ENCODE measurements at regions of chr9 and their contacts with region 1.

Region 1: DNA sequence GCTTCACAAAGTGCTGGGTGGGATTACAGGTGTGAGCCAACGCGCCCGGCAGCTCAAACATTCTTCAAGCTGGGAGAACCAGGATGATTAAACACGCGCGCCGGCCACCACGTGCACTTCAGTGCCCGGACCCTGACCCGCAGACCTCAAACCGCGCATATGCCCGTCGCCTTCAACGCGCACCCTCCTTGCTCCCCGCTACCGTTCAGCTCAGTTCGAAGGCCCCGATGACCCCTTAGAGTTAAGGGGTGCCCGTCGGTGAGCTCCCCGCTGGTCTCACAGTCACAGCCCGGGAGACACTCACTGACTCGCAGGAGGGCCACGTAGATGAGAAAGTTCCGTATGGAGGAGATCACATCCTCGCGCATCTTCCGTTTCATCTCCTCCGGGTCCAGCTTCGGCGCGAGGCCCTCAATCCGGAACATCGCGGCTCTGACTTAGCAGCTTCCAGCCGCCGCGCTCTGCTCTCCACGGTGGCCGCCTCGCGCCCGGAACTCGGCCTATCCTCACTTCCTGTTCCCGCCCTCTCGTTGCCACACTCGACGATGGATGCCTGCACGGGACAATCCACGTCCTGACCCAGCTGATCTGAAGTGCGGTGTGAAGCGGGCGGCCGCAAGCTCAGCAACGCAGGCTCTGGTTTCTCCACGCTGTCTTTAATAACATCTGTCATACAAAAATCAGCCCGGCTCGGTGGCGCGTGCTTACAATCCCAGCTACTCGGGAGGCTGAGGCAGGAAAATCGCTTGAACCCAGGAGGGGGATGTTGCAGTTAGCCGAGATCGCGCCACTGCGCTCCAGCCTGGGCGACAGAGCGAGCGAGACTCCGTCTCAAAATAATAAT is at the start of gene TOMM5:
- DNase-seq: peak; percentile 96
- H3K4me3 ChIP-seq: peak within 1 kb of the TSS; percentile 82 to 86 (median 85)
- H3K27ac ChIP-seq: peak within 1 kb of the TSS; percentile 81 to 90 (median 84)
- H3K4me1 ChIP-seq: peaks cover 0 to 48% (median 28%) of the 10 kb centered on the region in 4 donors
- H3K27me3 ChIP-seq: no peaks in the 10 kb centered on the region
- CTCF ChIP-seq: no peak
- EP300 ChIP-seq: peak in 1 of 4 donors; percentile 69
- POLR2A ChIP-seq: peak; percentile 79 to 91
- total RNA-seq, gene TOMM5: 69.2 to 173 (median 134) TPM

Region 2: DNA sequence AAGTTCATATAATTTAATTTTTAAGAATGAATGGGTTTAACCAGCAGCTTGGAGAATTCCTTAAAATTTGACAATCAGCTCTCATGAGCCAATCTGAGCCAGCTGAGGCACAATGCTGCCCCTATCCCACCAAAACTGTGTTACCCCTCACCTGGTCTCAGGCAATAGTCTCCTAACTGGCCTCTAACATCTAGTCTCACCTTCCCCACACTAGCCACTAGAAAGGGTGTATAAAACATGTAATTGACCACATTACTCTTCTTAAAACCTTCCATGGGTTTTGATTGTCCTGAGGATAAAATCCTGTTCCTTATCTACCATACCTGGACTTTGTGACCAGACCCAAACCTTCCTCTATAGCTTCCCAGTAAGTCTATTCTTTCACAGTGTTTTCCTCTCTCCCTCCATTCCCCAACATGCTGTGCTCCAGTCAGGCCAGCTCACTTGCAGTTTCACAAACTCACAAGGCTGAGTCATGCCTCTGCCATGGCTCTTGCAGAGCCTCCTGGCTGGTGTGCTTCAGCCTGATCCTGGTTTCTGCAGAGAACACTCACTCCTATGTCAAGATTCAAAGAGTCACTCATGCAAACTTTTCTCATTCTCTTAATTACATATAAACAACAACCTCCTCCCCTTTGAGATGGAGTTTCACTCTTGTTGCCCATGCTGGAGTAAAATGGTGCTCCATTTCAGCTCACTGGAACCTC is 488.0 kb before region 1 on chr9:
- intact Hi-C with region 1: no loop called
- DNase-seq: no peak
- H3K4me3 ChIP-seq: no peak overlapping the region
- H3K27ac ChIP-seq: no peak overlapping the region
- H3K4me1 ChIP-seq: no peaks in the 10 kb centered on the region
- H3K27me3 ChIP-seq: peaks cover 0 to 5% (median 0%) of the 10 kb centered on the region in 3 donors
- CTCF ChIP-seq: no peak
- EP300 ChIP-seq: no peak
- POLR2A ChIP-seq: no peak

Region 3: DNA sequence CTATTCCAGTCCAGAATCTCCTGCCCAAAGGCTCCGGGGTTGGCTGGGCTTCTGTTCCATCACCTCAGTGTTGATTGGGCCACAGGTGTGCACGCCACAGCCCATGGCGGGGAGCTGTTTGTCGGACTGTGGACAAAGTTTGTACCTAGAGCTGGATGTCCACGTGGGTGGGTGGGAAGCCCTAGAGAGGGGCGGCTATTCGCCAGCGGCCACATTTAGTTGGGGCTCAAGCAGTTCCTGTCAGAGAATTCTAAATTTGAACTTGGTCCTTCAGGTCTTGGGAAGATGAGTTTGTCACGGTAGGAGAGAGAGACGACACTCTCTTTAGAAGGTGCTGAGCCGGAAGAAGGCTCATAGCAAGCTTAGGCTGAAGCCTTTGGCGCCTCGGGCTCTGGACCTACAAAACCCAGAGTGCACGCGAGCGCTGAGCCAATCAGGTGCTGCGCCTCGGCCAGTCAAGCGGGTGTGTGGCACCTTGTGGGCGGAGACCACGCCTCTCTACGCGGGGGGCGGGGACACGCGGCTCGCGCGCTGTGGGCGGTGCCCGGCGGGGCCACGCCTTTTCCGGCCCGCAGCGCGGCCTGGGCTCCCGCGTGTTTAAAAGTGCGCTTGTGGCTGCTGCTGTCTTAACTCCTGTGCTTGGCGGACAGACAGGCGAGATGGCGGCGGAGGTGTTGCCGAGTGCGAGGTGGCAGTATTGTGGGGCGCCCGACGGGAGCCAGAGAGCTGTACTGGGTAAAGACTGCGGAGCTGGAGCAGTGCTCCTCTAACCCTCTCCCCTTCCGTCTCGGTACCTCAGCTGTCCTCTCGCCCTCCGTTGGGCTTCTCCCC is 106.7 kb before region 1 on chr9 and contains the start of gene POLR1E:
- intact Hi-C with region 1: loop called (anchors 2 kb)
- DNase-seq: peak; percentile 97
- H3K4me3 ChIP-seq: peak within 1 kb of the TSS; percentile 53 to 79 (median 69)
- H3K27ac ChIP-seq: peak within 1 kb of the TSS; percentile 82 to 95 (median 91)
- H3K4me1 ChIP-seq: peaks cover 0 to 33% (median 28%) of the 10 kb centered on the region in 4 donors
- H3K27me3 ChIP-seq: no peaks in the 10 kb centered on the region
- CTCF ChIP-seq: no peak
- EP300 ChIP-seq: no peak
- POLR2A ChIP-seq: peak; percentile 43 to 70
- total RNA-seq, gene POLR1E: 17.4 to 33.4 (median 28.1) TPM

Region 4: DNA sequence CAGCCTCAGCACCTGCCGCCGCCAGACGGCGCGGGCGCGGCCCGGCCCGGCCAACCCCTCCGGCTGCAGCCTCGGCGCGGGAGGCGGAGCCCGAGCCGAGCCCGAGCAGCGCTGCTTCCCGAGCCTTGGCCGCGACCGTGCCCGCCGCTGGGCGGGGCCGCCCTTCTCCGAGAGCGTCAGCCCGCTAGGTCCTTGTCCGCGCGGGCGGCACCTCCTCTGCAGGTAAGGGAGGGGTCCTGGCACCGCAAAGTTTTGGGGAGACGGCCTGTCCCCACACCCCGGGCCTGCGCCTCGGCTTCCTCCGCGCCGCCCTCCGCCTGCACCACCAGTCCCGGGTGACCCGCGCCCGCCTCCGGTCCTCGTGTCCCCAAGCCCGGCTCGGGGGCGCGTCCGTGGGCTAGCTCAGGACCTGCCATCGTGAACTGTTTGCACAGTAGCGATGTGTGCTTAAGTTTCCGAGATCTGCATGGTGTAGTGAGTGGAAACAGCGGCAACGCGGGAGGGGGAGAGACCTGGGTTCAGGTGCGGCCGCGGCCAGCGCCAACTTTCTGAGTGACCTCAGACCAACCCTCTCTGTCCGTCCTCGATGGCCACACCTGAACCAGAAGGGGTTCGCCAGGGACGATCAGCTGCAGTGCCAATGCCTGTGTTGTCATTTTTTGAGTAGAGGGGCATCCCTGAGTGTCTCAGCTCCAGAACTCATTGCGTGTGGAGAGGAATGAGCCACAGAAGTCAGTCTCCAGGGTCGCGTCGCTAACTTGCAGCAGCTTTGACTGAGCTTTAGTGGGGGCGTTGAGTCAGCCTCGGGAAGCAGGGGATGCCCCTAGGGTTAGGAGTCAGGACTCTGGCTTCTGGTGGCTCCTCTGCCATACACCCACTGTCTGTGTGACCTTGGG is 58.8 kb after region 1 on chr9 and contains the start of gene FRMPD1:
- intact Hi-C with region 1: loop called (anchors 5 kb)
- DNase-seq: peak; percentile 74
- H3K4me3 ChIP-seq: peak within 1 kb of the TSS; percentile 41 to 70 (median 58)
- H3K27ac ChIP-seq: no peak within 1 kb of the TSS
- H3K4me1 ChIP-seq: peaks cover 0 to 12% (median 8%) of the 10 kb centered on the region in 4 donors
- H3K27me3 ChIP-seq: peaks cover 0 to 36% (median 20%) of the 10 kb centered on the region in 3 donors
- CTCF ChIP-seq: no peak
- EP300 ChIP-seq: no peak
- POLR2A ChIP-seq: no peak
- total RNA-seq, gene FRMPD1: 0.16 to 0.71 (median 0.34) TPM

Region 5: GRCh38 chr9:37668116-37668601 is 75.8 kb after region 1 on chr9:
- intact Hi-C with region 1: no loop called
- DNase-seq: no peak
- H3K4me3 ChIP-seq: no peak overlapping the region
- H3K27ac ChIP-seq: no peak overlapping the region
- H3K4me1 ChIP-seq: no peaks in the 10 kb centered on the region
- H3K27me3 ChIP-seq: peaks cover 0 to 9% (median 0%) of the 10 kb centered on the region in 3 donors
- CTCF ChIP-seq: no peak
- EP300 ChIP-seq: no peak
- POLR2A ChIP-seq: no peak

Region 6: GRCh38 chr9:37784616-37785483 is 192.5 kb after region 1 on chr9 and contains the start of gene EXOSC3:
- intact Hi-C with region 1: no loop called
- DNase-seq: peak; percentile 93
- H3K4me3 ChIP-seq: peak within 1 kb of the TSS; percentile 84 to 92 (median 86)
- H3K27ac ChIP-seq: peak within 1 kb of the TSS; percentile 85 to 89 (median 86)
- H3K4me1 ChIP-seq: peaks cover 0 to 19% (median 14%) of the 10 kb centered on the region in 4 donors
- H3K27me3 ChIP-seq: peaks cover 0 to 5% (median 4%) of the 10 kb centered on the region in 3 donors
- CTCF ChIP-seq: peak in 1 of 4 experiments; percentile 15
- EP300 ChIP-seq: no peak
- POLR2A ChIP-seq: peak; percentile 61 to 63
- total RNA-seq, gene EXOSC3: 38.7 to 44.6 (median 41.3) TPM

Region 7: GRCh38 chr9:37800631-37801286 is 208.4 kb after region 1 on chr9 and contains the start of gene DCAF10:
- intact Hi-C with region 1: loop called (anchors 5 kb)
- DNase-seq: peak; percentile 92
- H3K4me3 ChIP-seq: peak within 1 kb of the TSS; percentile 90 to 96 (median 92)
- H3K27ac ChIP-seq: peak within 1 kb of the TSS; percentile 90 to 94 (median 92)
- H3K4me1 ChIP-seq: peaks cover 5 to 36% (median 29%) of the 10 kb centered on the region in 4 donors
- H3K27me3 ChIP-seq: no peaks in the 10 kb centered on the region
- CTCF ChIP-seq: no peak
- EP300 ChIP-seq: no peak
- POLR2A ChIP-seq: peak; percentile 56 to 64
- total RNA-seq, gene DCAF10: 29.1 to 49.3 (median 40.6) TPM

Measured in sigmoid colon (tissue), 7 donors.